ENCODE measurements at regions of chr2 and their contacts with region 1.

Region 1: DNA sequence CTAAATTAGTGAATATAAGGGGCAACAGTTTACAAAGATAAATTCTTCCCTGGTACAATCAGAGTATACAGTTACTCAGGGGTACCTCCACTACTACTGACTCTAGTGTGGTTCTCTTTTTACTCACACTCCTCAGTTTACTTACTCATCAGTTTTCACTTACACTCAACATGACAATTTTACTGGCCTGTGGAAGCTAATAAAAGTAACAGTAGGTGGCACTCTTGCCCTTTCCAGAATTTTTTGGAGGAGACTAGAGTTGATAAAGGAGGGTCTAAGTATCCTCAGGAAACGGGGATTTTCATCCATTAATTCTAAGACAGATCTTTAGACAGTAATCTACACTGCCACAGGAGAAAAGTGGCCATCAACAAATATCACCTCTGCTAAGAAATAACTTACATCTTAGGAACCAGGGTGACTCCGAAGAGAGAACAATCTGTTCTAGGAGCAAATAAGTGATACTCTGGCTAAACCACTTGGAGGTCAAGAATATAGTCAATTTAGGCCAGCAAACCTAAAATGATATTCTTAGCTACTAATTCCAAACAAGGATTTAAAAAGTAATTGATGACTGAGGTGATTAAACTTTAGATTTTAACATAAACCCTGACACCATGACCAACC is 61.3 kb downstream of the ATL2 start:
- DNase-seq: no peak

Region 2: GRCh38 chr2:38214209-38214717 is 101.6 kb before region 1 on chr2:
- intact Hi-C with region 1: no loop called
- DNase-seq: peak in 1 of 10 donors; percentile 56

Region 3: DNA sequence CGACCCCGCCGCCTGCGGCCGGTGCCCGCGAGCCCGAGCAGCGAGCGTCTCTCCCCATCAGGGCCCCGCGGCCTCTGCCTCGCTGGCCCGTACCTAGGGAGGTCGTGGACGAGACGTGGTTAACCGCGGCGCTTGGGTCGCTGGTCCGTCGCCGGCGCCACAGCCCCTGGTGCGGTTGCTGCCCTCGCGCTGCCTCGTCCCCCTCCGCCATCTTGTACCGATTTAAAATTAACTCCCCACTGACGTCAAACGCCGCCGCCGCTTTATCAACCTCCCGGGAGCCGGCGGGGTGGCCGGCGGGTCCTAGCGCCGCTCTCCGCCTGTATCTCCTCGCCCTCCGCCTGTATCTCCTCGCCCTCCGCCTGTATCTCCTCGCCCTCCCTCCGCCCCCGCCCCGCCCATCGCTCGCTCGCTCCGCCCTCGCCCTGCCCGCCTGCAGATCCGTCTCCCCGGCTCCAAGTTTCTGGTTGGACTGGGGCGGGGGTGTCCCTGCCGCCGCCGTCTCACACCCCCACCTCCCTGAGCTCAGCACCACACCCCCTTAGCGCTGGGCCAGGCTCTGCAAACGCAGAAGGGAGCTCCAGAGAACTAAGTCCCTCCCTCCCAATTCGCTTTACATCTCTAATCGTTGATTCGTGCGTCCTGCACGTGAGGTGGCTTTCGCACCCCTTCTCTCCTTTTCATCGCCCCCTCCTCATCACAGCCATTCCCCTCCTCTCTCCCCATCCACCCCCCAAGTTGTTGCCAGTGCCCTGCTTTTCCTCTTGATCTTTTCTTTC is 61.4 kb after region 1 on chr2 and contains the start of gene ATL2:
- intact Hi-C with region 1: loop called (anchors 5 kb)
- DNase-seq: peak; percentile 89 to 99 (median 94)

Region 4: DNA sequence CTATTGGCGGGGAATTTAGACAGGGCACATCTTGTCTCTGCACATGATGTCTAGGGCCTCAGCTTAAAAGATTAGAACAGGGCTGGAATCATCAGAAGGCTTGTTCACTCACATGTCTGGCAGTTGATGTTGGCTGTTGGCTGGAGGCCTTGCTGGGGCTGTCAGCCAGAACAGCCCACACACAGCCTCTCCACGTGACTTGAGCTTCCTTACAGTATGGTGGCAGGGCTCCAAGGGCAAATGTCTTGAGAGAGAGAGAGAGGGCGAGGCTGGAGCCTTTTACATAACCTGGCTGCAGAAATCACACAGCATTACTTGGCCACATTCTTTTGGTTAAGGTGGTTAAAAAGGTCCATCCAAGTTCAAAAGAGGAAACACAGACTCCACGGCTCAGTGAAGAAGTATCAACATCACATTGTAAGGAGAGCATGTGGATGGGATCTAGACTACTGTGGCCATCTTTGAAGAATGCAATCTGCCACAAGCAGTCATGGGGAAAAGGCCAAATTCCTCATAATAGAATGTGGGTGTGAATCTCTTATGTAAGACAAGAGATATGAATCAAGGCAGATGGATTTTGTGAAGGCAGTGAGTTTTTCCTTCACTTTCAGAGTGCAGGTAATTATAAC is 404.9 kb after region 1 on chr2:
- intact Hi-C with region 1: loop called (anchors 10 kb)
- DNase-seq: peak in 7 of 10 donors; percentile 13 to 92 (median 48)

Region 5: DNA sequence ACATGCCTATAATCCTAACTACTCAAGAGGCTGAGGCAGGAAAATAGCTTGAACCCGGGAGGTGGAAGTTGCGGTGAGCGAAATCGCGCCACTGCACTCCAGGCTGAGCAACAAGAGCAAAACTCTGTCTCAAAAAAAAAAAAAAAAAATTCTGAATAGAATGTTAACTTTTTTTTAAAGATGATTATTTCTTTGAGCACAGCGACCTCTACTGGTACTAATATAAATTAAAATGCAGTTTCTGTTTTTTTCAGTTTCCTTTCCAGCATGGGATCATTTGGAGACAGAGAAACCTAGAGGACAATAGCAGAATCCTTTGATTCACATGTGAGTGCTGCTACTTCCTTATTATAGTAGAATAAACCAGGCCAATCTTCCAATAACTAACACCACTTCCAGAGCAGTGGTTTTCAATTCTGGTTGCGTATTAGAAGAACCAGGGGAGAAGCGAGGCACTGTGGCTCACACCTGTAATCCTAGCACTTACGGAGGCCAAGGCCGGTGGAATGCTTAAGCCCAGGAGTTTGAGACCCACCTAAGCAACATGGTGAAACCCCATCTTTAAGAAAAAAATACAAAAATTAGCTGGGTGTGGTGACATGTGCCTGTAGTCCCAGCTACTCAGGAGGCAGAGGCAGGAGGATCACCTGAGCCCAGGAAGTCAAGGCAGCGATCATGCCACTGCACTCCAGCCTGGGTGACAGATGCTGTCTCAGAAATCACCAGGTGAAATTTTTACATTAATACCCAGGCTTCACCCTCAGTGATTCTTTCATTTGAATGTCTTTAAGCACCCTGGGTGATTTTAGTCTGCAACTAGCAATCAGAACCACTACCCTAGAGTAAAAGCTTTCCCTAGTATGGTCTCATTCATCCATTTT is 425.3 kb after region 1 on chr2:
- intact Hi-C with region 1: no loop called
- DNase-seq: no peak

Region 6: DNA sequence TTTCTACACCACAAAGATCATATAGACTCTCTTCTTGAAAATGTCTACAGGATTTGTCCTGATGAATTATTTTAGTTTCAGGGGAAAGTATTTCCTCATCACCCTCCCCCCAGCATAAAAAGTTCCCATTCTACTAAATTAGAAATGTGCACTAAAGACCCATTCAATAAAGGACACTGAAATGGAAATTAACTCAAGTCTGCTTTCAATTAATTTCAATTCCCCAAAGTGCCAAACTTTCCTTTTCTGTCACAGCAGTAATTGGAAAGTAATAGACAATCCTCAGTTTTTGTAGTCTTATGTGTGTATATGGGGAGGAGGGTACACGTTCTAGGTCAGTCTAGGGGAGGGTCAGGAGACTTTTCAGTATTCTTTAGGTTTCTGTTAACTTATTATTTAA is 595.4 kb after region 1 on chr2:
- intact Hi-C with region 1: no loop called
- DNase-seq: no peak